ENCODE measurements at regions of chr20 and their contacts with region 1.

Region 1: DNA sequence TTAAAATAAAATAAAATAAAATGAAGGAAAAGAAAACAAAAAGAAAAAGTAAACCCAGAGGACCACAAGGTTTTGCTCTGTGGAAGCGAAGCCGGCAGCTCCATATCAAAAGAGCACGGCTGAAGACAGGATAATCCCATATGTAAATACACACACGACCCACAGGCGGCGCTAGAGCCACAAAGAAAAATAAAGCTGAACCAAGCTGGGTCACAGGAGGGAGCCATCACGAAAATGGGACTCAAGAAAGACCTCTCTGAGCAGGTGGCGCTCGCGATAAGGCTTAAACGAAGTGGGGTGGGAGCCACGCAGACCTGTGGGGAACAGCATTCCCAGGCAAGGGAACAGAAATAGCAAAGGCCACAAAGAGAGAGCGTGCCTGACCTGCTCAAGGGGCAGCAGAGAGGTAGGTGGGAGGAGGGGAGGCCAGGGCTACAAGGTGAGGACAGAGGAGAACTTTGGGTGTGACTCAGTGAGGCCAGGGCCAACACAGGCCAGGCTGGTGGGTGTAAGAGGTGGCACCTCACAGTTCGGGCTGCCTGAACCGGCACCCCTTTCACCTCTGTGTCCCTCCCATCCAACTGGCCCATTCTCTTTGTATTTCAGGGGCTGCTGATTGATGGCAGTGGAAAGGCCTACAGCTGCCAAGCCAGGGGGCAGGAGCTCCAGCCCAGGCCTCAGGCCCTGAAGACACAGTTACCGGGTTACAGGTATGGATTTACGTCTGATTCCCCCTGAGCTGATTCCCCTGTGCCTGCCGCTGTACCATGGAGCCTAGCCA is 26.0 kb downstream of the PTGIS start:
- DNase-seq: peak; percentile 84

Region 2: GRCh38 chr20:49420811-49421295 is 121.1 kb before region 1 on chr20:
- intact Hi-C with region 1: no loop called
- DNase-seq: no peak

Region 3: DNA sequence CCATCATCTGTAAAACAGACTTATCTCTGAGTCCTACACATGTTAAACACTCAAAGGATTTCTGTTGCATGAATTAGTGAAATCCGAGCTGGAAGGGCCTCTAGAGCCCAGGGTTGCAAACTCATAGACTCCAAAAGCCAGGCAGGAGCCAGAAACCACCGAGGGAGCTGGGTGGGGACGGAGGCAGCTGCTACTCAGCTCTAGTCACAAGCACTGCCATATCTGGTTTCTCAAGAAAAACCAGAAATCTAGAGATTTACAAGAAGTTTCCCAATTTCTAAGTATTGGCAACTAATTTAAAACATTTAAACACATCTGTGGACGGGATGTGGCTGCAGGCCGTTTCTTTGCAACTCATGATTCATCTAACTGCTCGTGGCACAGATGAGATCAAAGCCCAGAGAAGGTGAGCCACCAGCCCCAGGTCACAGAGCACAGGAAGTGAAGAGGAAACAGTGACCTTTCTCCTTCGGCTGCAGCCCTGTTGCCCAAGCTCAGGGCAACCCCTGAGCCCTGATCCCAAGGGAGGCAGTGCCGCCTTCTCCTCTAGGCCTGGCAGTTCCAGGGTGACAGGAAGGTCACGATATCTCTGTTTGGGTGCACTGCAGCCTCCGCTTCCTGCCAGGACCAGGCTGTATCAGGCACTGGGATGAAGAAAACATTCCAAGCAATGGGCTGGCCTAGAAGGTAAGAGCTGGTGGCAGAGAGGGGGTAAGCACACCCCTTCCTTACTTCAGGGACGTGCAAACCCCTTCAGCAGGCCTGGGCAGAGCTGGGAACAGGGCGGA is 52.4 kb after region 1 on chr20:
- intact Hi-C with region 1: no loop called
- DNase-seq: no peak

Region 4: DNA sequence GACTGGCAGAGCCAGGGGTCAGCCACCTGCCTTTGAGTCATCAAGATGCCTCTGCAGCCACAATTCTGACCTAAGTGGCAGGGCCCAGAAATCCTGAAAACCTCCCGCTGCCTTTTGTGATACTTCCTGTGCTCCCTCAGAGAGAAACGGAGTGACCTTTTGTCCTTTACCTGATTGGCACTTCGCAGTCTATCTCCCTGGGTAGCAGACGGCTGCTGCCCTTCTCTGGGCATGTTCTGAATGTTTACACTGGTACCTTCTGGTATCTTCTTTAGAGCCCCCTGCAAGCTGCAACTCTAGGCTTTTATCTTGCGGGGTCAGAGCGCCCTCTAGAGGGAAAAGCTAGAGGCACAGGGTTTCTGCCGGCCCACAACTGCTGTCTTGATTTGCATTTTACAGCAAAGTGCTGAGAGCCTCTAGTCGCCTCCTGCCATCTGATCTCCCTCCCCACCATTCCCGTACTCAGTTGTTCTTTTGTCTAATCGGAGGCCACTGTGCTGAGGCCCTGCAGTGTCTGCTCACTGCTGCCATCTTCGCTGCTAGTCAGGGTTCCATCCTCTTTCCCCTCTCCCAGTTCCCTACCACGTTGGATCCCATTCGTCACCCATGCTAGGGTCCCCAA is 346.5 kb after region 1 on chr20:
- intact Hi-C with region 1: loop called (anchors 5 kb)
- DNase-seq: no peak

Region 5: GRCh38 chr20:49928401-49929141 is 386.6 kb after region 1 on chr20:
- intact Hi-C with region 1: loop called (anchors 5 kb)
- DNase-seq: peak; percentile 88